ENCODE measurements at regions of chr14 and their contacts with region 1.

Region 1: DNA sequence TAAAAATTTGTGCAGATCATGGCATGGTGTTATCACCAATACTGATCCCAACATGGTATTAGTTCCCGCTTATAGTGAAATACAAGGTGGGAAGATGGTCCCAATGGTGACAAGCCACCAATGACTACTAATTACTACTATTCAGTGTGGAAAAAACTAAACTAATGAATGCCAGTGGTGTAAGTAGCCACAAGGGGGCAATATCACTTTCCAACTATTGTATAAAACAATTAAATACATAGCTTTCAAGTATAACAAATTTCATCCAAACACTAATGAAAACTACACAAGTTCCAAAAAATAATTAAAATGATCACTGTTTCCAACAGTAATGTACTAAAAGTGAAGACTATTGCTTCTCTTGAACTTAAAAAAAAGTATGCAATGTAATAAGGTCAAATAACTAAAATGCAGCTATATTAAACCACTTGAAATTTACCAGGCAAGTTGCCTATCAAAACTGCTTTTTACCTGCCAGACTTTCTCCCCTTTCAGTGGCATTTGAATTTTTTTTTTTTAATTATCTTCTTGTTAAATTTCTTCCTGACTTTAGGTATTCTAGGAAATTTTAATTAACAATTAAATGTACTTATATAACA is 58.0 kb downstream of the PAPLN start:
- DNase-seq: no peak
- ATAC-seq: no peak
- H3K4me3 Mint-ChIP-seq: no peak overlapping the region
- H3K27ac Mint-ChIP-seq: no peak overlapping the region
- H3K4me1 Mint-ChIP-seq: peaks cover 18% of the 10 kb centered on the region
- H3K27me3 Mint-ChIP-seq: no peaks in the 10 kb centered on the region

Region 2: DNA sequence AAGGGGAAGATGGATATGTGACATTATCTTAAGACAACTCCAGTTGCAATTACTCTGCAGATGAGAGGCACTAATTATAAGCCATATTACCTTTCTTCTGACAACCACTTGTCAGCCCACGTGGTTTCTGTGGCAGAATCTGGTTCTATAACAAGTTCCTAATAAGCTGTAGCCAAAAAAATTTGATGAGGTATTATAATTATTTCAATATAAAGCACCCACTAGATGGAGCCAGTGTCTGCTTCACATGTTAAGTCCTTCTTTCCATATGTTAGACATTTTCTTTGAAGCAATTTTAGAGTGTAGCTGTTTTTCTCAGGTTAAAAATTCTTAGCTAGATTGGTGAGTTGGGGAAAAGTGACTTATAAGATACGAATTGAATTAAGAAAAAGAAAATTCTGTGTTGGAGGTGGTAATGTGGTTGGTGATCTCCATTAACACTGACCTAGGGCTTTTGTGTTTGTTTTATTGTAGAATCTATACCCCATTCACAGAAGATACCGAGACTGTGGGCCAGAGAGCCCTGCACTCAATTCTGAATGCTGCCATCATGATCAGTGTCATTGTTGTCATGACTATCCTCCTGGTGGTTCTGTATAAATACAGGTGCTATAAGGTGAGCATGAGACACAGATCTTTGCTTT is 122.1 kb before region 1 on chr14:
- CTCF ChIA-PET with region 1: interaction called, 11 read pairs
- POLR2A ChIA-PET with region 1: no interaction called
- intact Hi-C with region 1: loop called in 1 of 2 experiments (anchors 2 kb)
- DNase-seq: peak; percentile 7
- ATAC-seq: no peak
- H3K4me3 Mint-ChIP-seq: no peak overlapping the region
- H3K27ac Mint-ChIP-seq: no peak overlapping the region
- H3K4me1 Mint-ChIP-seq: no peaks in the 10 kb centered on the region
- H3K27me3 Mint-ChIP-seq: no peaks in the 10 kb centered on the region

Region 3: DNA sequence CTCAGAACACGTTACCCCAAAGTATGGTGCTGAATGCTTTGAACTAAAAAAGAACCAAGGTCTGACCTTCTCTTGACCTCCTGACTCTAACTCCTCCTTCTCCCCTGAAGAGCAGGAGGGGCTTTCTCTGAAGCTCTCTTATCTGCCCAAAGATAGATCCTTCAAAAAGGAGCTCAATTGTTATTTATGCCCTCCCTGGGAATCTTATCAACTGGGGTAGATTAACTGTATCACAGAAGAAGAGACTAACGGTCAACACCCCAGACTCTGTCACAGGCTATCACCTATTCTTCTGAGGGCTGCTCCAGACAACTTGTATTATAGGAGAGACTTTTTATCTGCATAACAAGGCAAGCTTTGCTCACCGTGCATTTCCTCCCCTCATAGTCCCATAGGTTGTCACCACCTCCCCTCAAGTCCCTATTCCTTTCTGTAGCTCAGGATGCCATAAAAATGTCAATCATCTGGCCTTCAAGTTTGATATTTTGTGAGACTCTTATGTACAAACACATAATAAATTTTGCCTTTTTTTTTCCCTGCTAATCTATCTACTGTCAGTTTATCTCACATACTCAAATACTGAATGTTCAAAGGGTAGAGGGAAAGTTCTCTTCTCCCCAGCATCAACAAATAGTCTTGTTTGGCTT is 28.7 kb after region 1 on chr14:
- CTCF ChIA-PET with region 1: interaction called, 11 read pairs
- POLR2A ChIA-PET with region 1: no interaction called
- intact Hi-C with region 1: no loop called
- DNase-seq: no peak
- ATAC-seq: no peak
- H3K4me3 Mint-ChIP-seq: no peak overlapping the region
- H3K27ac Mint-ChIP-seq: no peak overlapping the region
- H3K4me1 Mint-ChIP-seq: peaks cover 31% of the 10 kb centered on the region
- H3K27me3 Mint-ChIP-seq: no peaks in the 10 kb centered on the region

Region 4: DNA sequence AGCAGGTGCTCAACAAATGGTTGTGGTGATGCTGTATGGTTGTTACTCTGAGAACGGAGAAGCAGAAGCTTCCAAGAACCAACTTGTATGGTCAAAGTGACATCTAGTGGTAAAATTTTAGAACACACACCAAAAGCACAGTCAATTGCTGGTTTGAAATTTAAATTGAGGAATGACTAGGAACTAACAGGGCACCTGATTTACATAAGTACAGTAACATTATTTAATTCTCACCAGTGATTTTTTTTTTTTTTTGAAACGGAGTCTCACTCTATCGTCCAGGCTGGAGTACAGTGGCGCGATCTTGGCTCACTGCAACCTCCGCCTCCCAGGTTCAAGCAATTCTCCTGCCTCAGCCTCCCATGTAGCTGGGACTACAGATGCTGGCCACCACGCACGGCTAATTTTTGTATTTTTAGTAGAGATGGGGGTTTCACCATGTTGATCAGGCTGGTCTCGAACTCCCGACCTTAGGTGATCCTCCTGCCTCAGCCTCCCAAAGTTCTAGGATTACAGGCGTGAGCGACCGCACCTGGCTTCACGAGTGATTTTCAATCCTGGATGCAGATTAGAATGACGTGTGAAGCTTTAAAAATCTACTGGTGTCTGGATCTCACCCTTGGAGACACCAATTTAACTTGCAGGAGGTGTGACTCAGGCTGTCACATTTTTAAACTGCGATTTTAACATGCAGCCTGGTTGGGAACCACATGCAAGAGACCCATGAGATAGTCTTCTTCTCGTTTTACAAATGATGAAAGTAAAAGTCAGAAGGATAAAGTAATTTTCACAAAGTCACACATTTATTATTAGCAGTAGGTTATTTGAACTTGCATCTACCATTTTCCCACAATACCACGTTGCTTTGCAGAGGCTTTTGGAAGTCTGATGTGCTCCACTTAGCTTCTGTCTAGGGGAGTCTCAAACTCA is 177.2 kb after region 1 on chr14:
- CTCF ChIA-PET with region 1: interaction called, 65 read pairs
- POLR2A ChIA-PET with region 1: interaction called, 4 read pairs
- intact Hi-C with region 1: loop called (anchors 1 kb)
- DNase-seq: no peak
- ATAC-seq: peak; percentile 32
- H3K4me3 Mint-ChIP-seq: no peak overlapping the region
- H3K27ac Mint-ChIP-seq: no peak overlapping the region
- H3K4me1 Mint-ChIP-seq: peaks cover 15% of the 10 kb centered on the region
- H3K27me3 Mint-ChIP-seq: no peaks in the 10 kb centered on the region

Region 5: GRCh38 chr14:73576391-73576790 is 281.1 kb after region 1 on chr14:
- CTCF ChIA-PET with region 1: no interaction called
- POLR2A ChIA-PET with region 1: no interaction called
- intact Hi-C with region 1: no loop called
- DNase-seq: no peak
- ATAC-seq: no peak
- H3K4me3 Mint-ChIP-seq: no peak overlapping the region
- H3K27ac Mint-ChIP-seq: no peak overlapping the region
- H3K4me1 Mint-ChIP-seq: peaks cover 6% of the 10 kb centered on the region
- H3K27me3 Mint-ChIP-seq: no peaks in the 10 kb centered on the region

Region 6: GRCh38 chr14:73696466-73697400 is 401.4 kb after region 1 on chr14:
- CTCF ChIA-PET with region 1: no interaction called
- POLR2A ChIA-PET with region 1: no interaction called
- intact Hi-C with region 1: loop called in 1 of 2 experiments (anchors 1 kb)
- DNase-seq: no peak
- ATAC-seq: peak; percentile 87
- H3K4me3 Mint-ChIP-seq: peak overlapping the region; percentile 46
- H3K27ac Mint-ChIP-seq: peak overlapping the region; percentile 92
- H3K4me1 Mint-ChIP-seq: peaks cover 50% of the 10 kb centered on the region
- H3K27me3 Mint-ChIP-seq: no peaks in the 10 kb centered on the region